PC-9 (cell line): ENCODE measurements at regions of chr2 and their contacts with region 1.

Region 1: DNA sequence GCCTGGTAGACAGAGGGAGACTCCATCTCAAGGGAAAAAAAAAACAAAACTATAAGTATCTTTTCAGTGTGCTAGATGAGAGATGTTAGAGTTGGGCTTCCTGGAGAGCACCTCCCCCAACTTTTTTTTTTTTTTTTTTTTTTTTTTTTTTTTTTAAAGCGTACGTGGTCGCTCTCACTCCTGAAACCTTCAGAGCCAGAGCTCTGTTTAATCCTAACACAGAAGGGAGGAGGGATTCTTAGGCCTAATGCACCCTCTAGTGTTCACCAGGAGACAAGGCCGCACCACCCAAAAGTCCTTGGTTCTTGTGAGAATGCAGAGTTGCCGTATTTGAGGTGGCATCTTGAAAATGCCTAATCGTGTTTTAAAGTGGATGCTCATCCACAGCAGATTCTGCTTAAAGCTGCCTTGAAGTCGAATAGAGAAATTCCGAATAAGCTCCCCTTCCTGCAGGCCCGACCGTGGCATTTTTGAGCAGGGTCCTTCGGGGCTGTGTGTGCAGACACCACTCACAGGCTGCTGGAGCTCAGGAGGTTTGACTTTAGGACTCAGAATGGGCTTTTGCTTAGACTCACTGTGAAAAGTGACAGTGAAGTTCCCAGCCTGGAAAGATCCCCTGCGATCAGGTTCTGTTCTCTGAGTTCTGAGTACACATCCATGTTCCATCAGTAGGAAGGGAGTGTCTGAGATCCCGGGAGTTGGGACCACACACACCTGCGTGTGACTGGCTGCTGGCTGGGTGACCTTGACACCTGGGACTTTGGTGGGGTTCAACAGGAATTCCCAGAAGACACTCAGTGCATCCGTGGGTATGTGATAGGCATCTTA is 252.6 kb downstream of the AGAP1 start:
- DNase-seq: peak; percentile 80 to 87
- H3K4me3 ChIP-seq: no peak overlapping the region
- H3K27ac ChIP-seq: no peak overlapping the region
- H3K4me1 ChIP-seq: peaks cover 15% of the 10 kb centered on the region
- H3K27me3 ChIP-seq: no peaks in the 10 kb centered on the region
- CTCF ChIP-seq: peak; percentile 95

Region 2: GRCh38 chr2:234974501-234975385 is 771.7 kb before region 1 on chr2:
- CTCF ChIA-PET with region 1: no interaction called
- POLR2A ChIA-PET with region 1: no interaction called
- intact Hi-C with region 1: loop called (anchors 2 kb)
- DNase-seq: no peak
- H3K4me3 ChIP-seq: no peak overlapping the region
- H3K27ac ChIP-seq: no peak overlapping the region
- H3K4me1 ChIP-seq: peaks cover 60% of the 10 kb centered on the region
- H3K27me3 ChIP-seq: no peaks in the 10 kb centered on the region
- CTCF ChIP-seq: no peak

Region 3: DNA sequence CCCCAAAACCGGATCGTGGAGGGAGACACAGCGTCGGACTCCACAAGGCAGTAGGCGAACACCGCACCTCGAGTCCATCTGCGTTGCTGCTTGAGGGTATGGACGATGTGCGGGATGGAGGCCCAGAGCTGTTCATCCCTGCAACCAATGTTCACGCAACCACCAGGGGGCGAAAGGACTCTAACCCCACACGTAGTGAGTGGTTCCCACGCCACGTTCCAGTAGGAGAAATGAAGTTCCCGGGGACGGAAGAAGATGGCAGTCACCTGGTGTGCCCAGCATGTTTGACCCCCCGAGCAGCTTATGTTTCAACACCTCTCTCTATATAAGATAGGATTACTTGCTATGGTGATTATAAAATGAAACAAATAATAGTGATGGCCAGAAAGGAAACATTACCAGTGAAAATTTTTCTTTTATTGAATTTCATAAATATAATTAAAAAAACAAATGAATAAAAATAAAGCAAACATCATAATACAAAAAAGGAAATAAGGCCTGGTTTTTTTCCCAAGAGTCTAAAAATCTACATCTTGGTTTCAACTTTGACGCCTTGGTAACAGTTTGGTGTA is 610.4 kb before region 1 on chr2:
- CTCF ChIA-PET with region 1: no interaction called
- POLR2A ChIA-PET with region 1: no interaction called
- intact Hi-C with region 1: loop called (anchors 1 kb)
- DNase-seq: peak; percentile 78 to 86
- H3K4me3 ChIP-seq: no peak overlapping the region
- H3K27ac ChIP-seq: no peak overlapping the region
- H3K4me1 ChIP-seq: no peaks in the 10 kb centered on the region
- H3K27me3 ChIP-seq: no peaks in the 10 kb centered on the region
- CTCF ChIP-seq: peak; percentile 94

Region 4: DNA sequence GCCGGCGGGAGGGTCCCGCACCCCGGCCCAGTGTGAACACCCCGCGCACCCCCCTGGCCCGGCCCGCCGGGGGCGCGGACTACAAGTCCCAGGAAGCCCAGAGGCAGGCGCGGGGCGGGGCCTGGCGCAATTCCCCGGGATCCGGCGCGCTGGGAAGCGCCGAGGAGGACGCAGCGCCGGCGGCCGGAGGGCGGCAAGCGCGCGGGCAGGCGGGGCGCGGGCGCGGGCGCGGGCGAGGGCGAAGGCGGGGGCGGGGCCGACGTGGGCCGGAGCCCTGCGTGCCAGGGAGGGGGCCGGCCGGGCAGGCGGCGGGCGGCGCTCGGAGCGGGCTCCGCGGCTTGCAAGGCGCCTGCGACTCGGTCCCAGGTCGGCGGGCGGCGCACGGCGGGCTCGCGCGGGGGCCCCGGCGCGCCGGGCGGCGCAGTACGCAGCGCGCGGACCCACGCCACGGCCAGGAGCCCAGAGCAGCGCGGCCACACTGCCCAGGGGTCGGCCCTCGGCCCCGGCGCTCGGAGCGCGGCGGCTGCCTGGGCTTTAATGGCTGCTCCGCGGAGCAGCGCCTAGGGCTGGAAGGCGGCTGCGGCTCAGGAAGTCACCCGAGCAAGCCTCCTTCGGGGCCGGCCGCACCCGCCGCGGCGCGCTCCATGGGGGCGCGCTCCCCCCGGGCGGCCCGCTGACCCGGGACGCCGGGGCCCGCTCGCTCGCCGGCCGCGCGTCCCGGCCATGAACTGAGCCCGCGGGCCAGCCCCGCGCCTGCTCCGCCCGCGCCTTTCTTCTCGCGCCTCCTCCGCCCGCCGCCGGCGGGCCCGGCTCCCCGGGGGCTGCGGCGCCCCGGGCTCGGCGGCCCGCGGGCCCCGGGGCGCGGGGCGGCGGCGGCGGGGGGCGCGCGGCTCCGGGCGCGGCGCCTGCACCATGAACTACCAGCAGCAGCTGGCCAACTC is 252.4 kb before region 1 on chr2 and contains the start of gene AGAP1:
- CTCF ChIA-PET with region 1: no interaction called
- POLR2A ChIA-PET with region 1: no interaction called
- intact Hi-C with region 1: loop called (anchors 2 kb)
- DNase-seq: peak; percentile 75 to 97
- H3K4me3 ChIP-seq: peak within 1 kb of the TSS; percentile 77
- H3K27ac ChIP-seq: peak within 1 kb of the TSS; percentile 69
- H3K4me1 ChIP-seq: peaks cover 20% of the 10 kb centered on the region
- H3K27me3 ChIP-seq: no peaks in the 10 kb centered on the region
- CTCF ChIP-seq: no peak
- total RNA-seq, gene AGAP1: 91.4 and 107 TPM in 2 replicates

Region 5: DNA sequence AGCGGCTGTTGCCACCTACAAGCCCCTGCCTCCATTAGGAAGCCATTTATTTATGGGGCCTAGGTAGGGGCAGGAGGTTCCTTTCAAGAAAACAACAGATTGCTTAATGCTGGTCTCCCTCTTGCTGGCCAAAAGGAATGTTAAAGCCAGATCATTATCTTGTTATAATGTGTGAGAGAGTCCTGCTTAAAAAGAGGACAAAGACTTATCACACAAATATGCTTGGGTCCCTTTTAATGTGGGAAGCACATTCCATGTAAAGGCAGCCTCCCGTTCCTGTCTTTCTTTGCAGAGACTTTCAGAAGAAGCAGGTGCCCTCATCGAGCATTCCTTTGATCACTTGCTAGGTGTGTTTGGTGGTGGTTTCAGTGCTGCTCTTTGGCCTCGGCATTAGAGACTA is 176.2 kb before region 1 on chr2:
- CTCF ChIA-PET with region 1: no interaction called
- POLR2A ChIA-PET with region 1: no interaction called
- intact Hi-C with region 1: loop called (anchors 1 kb)
- DNase-seq: peak; percentile 73 to 99
- H3K4me3 ChIP-seq: no peak overlapping the region
- H3K27ac ChIP-seq: peak overlapping the region; percentile 88
- H3K4me1 ChIP-seq: peaks cover 40% of the 10 kb centered on the region
- H3K27me3 ChIP-seq: no peaks in the 10 kb centered on the region
- CTCF ChIP-seq: no peak

Region 6: DNA sequence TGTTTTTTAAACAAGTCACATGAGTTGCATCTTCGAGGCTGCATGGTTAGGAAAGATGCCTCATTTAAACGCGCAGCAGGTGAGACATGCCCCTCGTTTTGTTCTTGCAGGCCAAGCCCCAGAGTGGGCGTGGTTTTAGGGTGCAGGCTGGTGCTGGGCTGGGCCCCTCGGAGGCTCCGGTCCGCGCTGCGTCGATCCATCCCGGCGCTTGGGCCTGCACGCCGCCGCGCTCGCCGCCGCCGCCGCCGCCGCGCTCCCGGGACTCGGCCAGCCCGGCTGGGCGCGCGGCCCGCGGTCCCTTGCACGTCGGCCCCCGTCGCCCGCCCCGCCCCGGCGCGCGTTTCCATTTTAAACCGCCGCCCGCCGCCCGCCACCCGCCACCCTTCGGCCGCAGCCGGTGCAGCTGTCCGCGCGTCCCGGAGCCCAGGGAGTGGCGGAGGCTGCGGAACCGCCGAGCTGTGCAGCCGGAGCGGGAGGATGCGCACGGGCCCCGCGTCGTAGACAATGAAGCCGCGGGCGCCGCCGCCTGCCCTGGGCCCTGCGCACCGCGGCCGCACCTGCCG is 77.1 kb before region 1 on chr2:
- CTCF ChIA-PET with region 1: interaction called, 4 read pairs
- POLR2A ChIA-PET with region 1: no interaction called
- intact Hi-C with region 1: loop called (anchors 2 kb)
- DNase-seq: peak; percentile 79 to 94
- H3K4me3 ChIP-seq: peak overlapping the region; percentile 41; the same call in 1 of the 2 replicates
- H3K27ac ChIP-seq: no peak overlapping the region
- H3K4me1 ChIP-seq: peaks cover 54% of the 10 kb centered on the region
- H3K27me3 ChIP-seq: no peaks in the 10 kb centered on the region
- CTCF ChIP-seq: no peak

Region 7: DNA sequence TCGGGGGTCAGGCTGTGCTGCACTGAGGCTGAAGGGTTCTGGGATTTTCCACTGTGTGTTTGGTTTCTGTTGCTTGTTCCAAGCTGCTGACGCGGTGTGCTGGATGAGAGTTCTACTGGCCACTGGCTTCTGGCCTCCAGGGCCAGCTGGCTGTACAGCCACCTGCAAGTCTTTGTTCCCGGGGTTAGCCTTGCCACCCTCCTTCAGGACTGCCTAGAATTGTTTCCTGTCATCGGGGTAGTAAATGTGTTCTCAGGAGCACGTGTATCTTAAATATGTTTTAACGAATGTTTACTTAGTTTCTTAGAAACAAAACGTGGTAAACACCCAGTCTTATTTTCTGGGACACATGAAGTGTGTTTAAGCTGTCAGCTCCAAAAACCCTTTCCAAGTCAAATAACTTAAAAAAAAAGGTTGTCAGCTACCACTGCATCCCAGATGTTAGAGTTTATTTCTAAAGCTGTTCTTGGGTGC is 21.4 kb before region 1 on chr2:
- CTCF ChIA-PET with region 1: interaction called, 11 read pairs
- POLR2A ChIA-PET with region 1: interaction called, 3 read pairs
- intact Hi-C with region 1: no loop called
- DNase-seq: no peak
- H3K4me3 ChIP-seq: no peak overlapping the region
- H3K27ac ChIP-seq: 0 out of 2 replicates have a peak overlapping the region, but pooled peaks have one; percentile 6
- H3K4me1 ChIP-seq: peaks cover 34% of the 10 kb centered on the region
- H3K27me3 ChIP-seq: no peaks in the 10 kb centered on the region
- CTCF ChIP-seq: no peak

Region 8: DNA sequence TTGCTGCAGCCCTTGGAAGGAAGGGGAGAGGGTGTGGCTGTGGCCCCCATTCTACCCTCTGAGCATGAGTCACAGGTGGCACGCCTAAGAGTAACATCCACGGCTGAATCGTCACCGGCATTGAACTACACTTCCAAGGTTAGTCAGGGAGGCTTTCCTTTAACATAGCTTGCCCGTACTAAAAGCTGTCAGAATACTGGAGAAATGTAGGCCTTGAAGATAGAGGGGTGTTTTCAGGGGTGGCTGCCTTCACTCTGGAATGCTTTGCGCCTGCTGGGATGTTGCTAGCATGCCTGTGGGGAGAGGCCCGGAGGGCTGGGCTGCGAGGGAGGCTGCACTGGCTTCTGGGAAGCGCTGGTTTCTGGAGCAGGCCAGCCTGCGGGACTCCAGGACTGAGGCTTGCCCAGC is 81.1 kb after region 1 on chr2:
- CTCF ChIA-PET with region 1: no interaction called
- POLR2A ChIA-PET with region 1: no interaction called
- intact Hi-C with region 1: no loop called
- DNase-seq: peak; percentile 83 to 87
- H3K4me3 ChIP-seq: no peak overlapping the region
- H3K27ac ChIP-seq: peak overlapping the region; percentile 41
- H3K4me1 ChIP-seq: peaks cover 17% of the 10 kb centered on the region
- H3K27me3 ChIP-seq: no peaks in the 10 kb centered on the region
- CTCF ChIP-seq: no peak